HepG2 (cell line): ENCODE measurements at regions of chr12 and their contacts with region 1.

Region 1: GRCh38 chr12:22624870-22625761 is at the start of gene ETNK1:
- DNase-seq: peak; percentile 89
- ATAC-seq: peak; percentile 98
- H3K4me3 ChIP-seq: peak within 1 kb of the TSS; percentile 69 to 86 (median 83)
- H3K27ac ChIP-seq: peak within 1 kb of the TSS; percentile 94
- H3K4me1 ChIP-seq: peaks cover 32% of the 10 kb centered on the region
- H3K27me3 ChIP-seq: no peaks in the 10 kb centered on the region; a peak in 2 of 5 replicates
- CTCF ChIP-seq: no peak
- EP300 ChIP-seq: no peak
- POLR2A ChIP-seq: peak; percentile 94 to 96
- RAD21 ChIP-seq: no peak
- total RNA-seq, gene ETNK1: 43.9 and 55.7 TPM in 2 replicates

Region 2: DNA sequence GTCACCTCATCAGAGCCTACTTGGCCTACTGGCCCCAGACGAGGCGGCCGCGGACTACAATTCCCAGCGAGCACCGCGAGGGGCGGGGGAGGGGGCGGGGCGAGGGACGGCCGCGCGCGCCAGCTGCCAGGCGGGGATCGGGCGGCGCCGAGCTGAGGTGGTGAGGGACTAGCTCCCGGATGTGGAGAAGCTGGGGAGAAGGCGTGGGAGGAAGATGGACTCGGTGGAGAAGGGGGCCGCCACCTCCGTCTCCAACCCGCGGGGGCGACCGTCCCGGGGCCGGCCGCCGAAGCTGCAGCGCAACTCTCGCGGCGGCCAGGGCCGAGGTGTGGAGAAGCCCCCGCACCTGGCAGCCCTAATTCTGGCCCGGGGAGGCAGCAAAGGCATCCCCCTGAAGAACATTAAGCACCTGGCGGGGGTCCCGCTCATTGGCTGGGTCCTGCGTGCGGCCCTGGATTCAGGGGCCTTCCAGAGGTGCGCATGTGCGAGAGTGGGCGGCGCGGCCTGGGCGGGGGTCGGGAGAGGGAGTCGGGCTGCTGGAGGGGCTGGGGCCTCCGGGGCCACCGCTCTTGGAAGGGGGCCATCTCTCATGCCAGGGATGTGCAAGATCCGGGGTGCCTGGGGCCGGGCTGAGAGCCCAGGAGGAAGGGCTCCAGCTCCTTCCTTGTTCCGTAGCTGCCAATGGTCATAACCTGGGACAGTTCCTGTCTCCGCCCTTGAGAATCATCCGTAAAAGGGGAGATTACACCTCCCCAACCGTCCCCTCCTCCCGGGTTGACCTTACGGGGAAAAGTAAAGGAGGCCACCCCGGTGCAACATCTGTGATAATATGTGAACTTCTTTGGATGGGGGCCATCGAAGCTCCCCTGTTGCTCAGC is 578.8 kb before region 1 on chr12 and contains the start of gene CMAS:
- CTCF ChIA-PET with region 1: no interaction called
- POLR2A ChIA-PET with region 1: no interaction called
- in situ Hi-C with region 1: no loop called
- intact Hi-C with region 1: loop called (anchors 2 kb)
- DNase-seq: peak; percentile 36
- ATAC-seq: peak; percentile 88
- H3K4me3 ChIP-seq: peak within 1 kb of the TSS; percentile 97 to 99 (median 98)
- H3K27ac ChIP-seq: peak within 1 kb of the TSS; percentile 76
- H3K4me1 ChIP-seq: peaks cover 76% of the 10 kb centered on the region
- H3K27me3 ChIP-seq: no peaks in the 10 kb centered on the region; a peak in 1 of 5 replicates
- CTCF ChIP-seq: no peak
- EP300 ChIP-seq: no peak
- POLR2A ChIP-seq: peak; percentile 30 to 75; a peak in 3 of 4 replicates
- RAD21 ChIP-seq: peak; percentile 16; the same call in 1 of the 2 replicates
- total RNA-seq, gene CMAS: 21.3 and 36.9 TPM in 2 replicates

Region 3: GRCh38 chr12:22529281-22530060 is 95.6 kb before region 1 on chr12:
- CTCF ChIA-PET with region 1: no interaction called
- POLR2A ChIA-PET with region 1: interaction called, 3 read pairs
- in situ Hi-C with region 1: no loop called
- intact Hi-C with region 1: loop called (anchors 1 kb)
- DNase-seq: peak; percentile 59
- ATAC-seq: peak; percentile 87
- H3K4me3 ChIP-seq: no peak overlapping the region
- H3K27ac ChIP-seq: no peak overlapping the region
- H3K4me1 ChIP-seq: no peaks in the 10 kb centered on the region
- H3K27me3 ChIP-seq: no peaks in the 10 kb centered on the region
- CTCF ChIP-seq: peak; percentile 53
- EP300 ChIP-seq: no peak
- POLR2A ChIP-seq: no peak
- RAD21 ChIP-seq: no peak

Region 4: DNA sequence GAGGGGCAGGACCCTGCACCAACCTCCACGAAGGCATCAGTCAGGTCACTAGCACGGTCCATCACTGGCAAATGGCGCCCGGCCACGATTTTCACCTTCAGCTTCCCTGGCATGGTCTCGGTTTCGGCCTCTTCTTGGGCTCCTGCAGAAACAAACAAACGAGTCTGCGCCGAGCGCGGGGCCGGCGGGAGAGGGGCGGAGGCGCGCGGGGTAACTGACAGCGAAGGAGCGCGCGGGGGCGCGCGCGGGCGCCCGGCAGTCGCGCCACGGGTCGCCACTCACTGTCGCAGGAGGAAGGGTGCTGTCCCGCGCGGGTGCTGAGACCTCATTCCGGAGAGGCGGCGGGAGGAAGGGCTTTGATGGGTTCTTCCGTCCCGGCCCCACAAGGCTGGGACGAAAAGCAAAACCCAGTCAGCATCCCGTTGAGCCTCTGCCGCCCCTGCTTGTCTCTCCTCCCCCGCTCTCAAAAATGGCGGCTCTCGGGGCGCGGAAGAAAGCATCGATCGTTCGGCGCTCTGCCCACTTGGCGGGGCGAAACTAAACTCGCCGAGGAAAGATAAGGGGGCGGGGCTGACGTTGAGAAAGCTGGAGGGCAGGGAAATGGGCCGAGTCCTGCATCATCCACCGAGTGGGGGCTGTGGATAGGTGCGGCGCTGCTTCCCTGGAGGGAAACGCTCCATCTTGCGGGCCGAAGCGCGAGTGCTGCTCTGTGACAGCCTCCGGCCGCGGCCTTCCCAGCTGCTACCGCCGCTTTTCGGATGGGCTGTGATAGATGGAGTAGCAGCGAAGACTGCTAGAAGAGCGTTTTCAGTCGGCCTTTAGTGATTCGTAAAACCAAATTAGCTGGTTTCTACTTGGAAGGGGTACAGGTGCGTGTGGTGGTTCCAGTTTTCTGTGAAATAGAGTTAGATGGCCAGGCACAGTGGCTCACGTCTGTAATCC is 80.8 kb before region 1 on chr12 and contains the start of gene C2CD5:
- CTCF ChIA-PET with region 1: no interaction called
- POLR2A ChIA-PET with region 1: interaction called, 44 read pairs
- in situ Hi-C with region 1: loop called (anchors 5 kb)
- intact Hi-C with region 1: loop called (anchors 1 kb)
- DNase-seq: peak; percentile 95
- ATAC-seq: peak; percentile 96
- H3K4me3 ChIP-seq: peak within 1 kb of the TSS; percentile 86 to 97 (median 95)
- H3K27ac ChIP-seq: peak within 1 kb of the TSS; percentile 91
- H3K4me1 ChIP-seq: peaks cover 22% of the 10 kb centered on the region
- H3K27me3 ChIP-seq: no peaks in the 10 kb centered on the region; a peak in 1 of 5 replicates
- CTCF ChIP-seq: peak; percentile 63
- EP300 ChIP-seq: peak in 1 of 2 experiments; percentile 41; a peak in 1 of 4 replicates
- POLR2A ChIP-seq: peak; percentile 72 to 88; a peak in 3 of 4 replicates
- RAD21 ChIP-seq: peak; percentile 30; the same call in 1 of the 2 replicates
- total RNA-seq, gene C2CD5: 14.6 and 24.2 TPM in 2 replicates

Region 5: GRCh38 chr12:22700106-22700505 is 75.0 kb after region 1 on chr12:
- CTCF ChIA-PET with region 1: no interaction called
- POLR2A ChIA-PET with region 1: no interaction called
- in situ Hi-C with region 1: no loop called
- intact Hi-C with region 1: no loop called
- DNase-seq: no peak
- ATAC-seq: no peak; the same call in 2 of the 3 replicates
- H3K4me3 ChIP-seq: no peak overlapping the region
- H3K27ac ChIP-seq: no peak overlapping the region
- H3K4me1 ChIP-seq: no peaks in the 10 kb centered on the region
- H3K27me3 ChIP-seq: no peaks in the 10 kb centered on the region
- CTCF ChIP-seq: no peak
- EP300 ChIP-seq: no peak
- POLR2A ChIP-seq: no peak
- RAD21 ChIP-seq: no peak